Panc1 (cell line): ENCODE measurements at regions of chr1 and their contacts with region 1.

Region 1: GRCh38 chr1:88655685-88656299 is 28.3 kb upstream of the PKN2 start:
- DNase-seq: peak; percentile 18
- ATAC-seq: no peak
- H3K4me3 ChIP-seq: no peak overlapping the region
- H3K27ac ChIP-seq: no peak overlapping the region
- H3K4me1 ChIP-seq: no peaks in the 10 kb centered on the region
- H3K27me3 ChIP-seq: no peaks in the 10 kb centered on the region; the same call in 1 of the 2 replicates
- CTCF ChIP-seq: peak; percentile 66; the same call in 1 of the 2 replicates

Region 2: DNA sequence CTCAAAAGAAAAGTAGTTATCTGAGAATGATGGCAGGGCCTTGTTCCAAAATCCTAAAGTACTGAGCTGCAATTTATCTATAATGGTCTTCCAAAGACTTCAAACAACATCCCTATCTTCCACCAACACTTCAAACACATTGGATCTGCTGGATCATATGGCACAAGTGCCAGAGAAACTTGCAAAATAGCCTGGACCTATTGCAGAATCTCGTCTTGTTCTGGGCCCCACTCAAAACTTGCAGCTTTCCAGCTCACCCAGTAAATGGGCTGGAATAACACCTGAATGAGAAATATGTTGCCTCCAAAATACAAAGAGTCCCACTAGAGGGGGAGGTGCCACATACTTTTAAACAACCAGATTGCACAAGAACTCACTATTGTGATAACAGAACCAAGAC is 15.7 kb before region 1 on chr1:
- CTCF ChIA-PET with region 1: no interaction called
- POLR2A ChIA-PET with region 1: no interaction called
- in situ Hi-C with region 1: no loop called
- intact Hi-C with region 1: no loop called
- DNase-seq: no peak
- ATAC-seq: no peak
- H3K4me3 ChIP-seq: no peak overlapping the region
- H3K27ac ChIP-seq: no peak overlapping the region
- H3K4me1 ChIP-seq: no peaks in the 10 kb centered on the region
- H3K27me3 ChIP-seq: no peaks in the 10 kb centered on the region; the same call in 1 of the 2 replicates
- CTCF ChIP-seq: no peak

Region 3: DNA sequence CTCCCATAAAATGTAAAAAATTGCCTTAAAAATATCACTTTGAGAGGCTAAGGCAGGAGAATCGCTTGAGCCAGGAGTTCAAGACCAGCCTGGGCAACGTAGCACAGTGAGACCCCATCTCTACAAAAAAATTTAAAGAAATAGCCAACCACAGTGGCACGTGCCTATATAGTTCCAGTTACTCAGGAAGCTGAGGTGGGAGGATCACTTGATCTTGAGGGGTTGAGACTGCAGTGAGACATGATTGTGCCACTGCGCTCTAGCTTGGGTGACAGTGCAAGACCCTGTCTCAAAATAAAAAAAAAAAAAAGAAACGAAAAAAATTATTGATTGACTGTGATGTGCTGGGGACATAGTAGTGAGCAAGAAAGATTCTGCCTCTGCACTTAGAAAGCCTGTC is 66.7 kb after region 1 on chr1:
- CTCF ChIA-PET with region 1: no interaction called
- POLR2A ChIA-PET with region 1: no interaction called
- in situ Hi-C with region 1: no loop called
- intact Hi-C with region 1: no loop called
- DNase-seq: no peak
- ATAC-seq: no peak
- H3K4me3 ChIP-seq: no peak overlapping the region
- H3K27ac ChIP-seq: no peak overlapping the region
- H3K4me1 ChIP-seq: no peaks in the 10 kb centered on the region
- H3K27me3 ChIP-seq: no peaks in the 10 kb centered on the region
- CTCF ChIP-seq: no peak

Region 4: GRCh38 chr1:88825721-88826120 is 169.9 kb after region 1 on chr1:
- CTCF ChIA-PET with region 1: interaction called, 11 read pairs
- POLR2A ChIA-PET with region 1: no interaction called
- in situ Hi-C with region 1: no loop called
- intact Hi-C with region 1: no loop called
- DNase-seq: no peak
- ATAC-seq: no peak
- H3K4me3 ChIP-seq: no peak overlapping the region
- H3K27ac ChIP-seq: no peak overlapping the region
- H3K4me1 ChIP-seq: no peaks in the 10 kb centered on the region
- H3K27me3 ChIP-seq: no peaks in the 10 kb centered on the region
- CTCF ChIP-seq: no peak